Activated T-helper 2 cell treated with anti-CD3 and anti-CD28 coated beads, Interferon-gamma antibody, Interleukin-2, Interleukin-4, amounts not matched to agents 10 μg/mL and 5 μg/mL and 100 μg/mL, durations not matched to agents 14 hours and 24 hours and 36 hours (primary cell): ENCODE measurements at regions of chr5 and their contacts with region 1.

Region 1: DNA sequence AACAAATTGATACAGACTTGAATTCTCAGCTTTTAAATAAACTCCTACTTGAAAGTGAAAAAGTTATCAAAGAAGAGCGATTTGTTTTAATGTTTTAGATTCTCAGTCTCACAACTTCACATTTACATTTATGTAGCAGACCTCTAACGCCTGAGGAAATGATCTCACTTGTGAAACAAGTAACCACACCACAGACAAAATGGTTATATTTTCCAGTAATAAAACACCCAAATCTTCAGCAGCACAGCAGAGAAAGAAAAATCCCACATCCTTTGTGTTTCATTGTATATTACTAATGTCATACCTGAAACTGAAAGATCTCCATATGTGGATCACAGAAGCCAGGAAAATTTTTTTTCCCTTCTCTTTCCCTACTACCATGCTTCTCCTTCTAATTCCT is 29.8 kb upstream of the GZMA start:
- DNase-seq: no peak
- H3K4me3 Mint-ChIP-seq: peak overlapping the region; percentile 32
- H3K27ac Mint-ChIP-seq: peak overlapping the region; percentile 75
- H3K4me1 Mint-ChIP-seq: peaks cover 46% of the 10 kb centered on the region
- H3K27me3 Mint-ChIP-seq: no peaks in the 10 kb centered on the region

Region 2: DNA sequence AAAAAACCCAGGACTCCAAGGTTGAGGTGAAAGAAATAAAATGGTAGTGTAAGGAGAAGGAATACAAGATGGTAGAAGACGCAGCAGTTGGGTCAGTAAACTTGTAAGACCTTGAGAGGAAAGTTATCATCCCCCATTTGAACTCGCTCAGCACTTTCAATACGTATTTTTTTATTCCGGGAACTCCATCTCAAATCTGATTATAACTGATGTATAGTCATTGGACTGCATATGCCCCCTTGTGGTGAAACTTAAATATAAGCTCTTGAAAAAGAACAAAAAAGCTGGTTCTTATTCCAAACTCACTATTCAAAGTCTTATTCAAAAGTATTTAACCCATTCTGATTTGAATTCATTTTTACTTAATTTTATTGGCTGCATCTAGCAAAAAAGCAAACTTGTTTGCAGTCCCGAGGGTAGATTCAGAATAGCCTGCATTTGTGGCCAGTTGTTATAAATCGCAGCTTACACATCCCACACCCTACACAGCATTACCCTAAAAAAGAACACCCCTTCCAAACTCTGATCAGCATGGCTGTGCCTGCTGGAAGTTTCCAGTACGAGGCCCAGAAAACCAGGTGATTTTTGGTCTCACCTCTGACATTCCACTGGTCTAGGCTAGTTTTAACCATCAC is 205.2 kb before region 1 on chr5:
- intact Hi-C with region 1: loop called (anchors 2 kb)
- DNase-seq: no peak
- H3K4me3 Mint-ChIP-seq: no peak overlapping the region
- H3K27ac Mint-ChIP-seq: no peak overlapping the region
- H3K4me1 Mint-ChIP-seq: peaks cover 29% of the 10 kb centered on the region
- H3K27me3 Mint-ChIP-seq: peaks cover 64% of the 10 kb centered on the region

Region 3: DNA sequence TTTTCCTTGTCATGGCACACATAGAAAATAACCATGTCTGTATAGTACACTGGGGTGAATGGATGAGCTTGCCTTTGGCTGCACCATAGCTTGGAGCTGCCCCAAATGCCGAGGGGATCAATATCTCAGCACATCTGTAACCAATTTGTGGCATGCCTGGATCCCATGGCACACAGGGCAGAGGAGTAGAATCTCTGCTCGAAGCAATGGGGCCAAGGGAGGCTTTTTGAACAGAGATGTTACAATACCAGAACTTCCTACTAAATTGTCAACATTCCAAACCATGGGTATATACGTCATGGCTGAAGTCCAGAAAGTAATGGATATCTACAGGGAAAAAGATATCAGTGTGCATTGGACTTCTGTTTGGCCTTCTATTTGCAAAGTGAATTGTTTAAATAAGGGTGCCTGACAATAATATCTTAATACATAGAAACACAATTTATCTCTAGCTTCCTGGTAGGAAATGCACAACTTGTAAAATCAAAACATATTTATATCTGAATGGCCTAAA is 126.3 kb before region 1 on chr5:
- intact Hi-C with region 1: no loop called
- DNase-seq: no peak
- H3K4me3 Mint-ChIP-seq: no peak overlapping the region
- H3K27ac Mint-ChIP-seq: no peak overlapping the region
- H3K4me1 Mint-ChIP-seq: peaks cover 22% of the 10 kb centered on the region
- H3K27me3 Mint-ChIP-seq: no peaks in the 10 kb centered on the region

Region 4: GRCh38 chr5:55021410-55021809 is 51.3 kb before region 1 on chr5:
- intact Hi-C with region 1: loop called (anchors 2 kb)
- DNase-seq: no peak
- H3K4me3 Mint-ChIP-seq: no peak overlapping the region
- H3K27ac Mint-ChIP-seq: no peak overlapping the region
- H3K4me1 Mint-ChIP-seq: peaks cover 41% of the 10 kb centered on the region
- H3K27me3 Mint-ChIP-seq: no peaks in the 10 kb centered on the region

Region 5: GRCh38 chr5:55062039-55062779 is 10.5 kb before region 1 on chr5:
- intact Hi-C with region 1: loop called (anchors 1 kb)
- DNase-seq: peak; percentile 78
- H3K4me3 Mint-ChIP-seq: peak overlapping the region; percentile 64
- H3K27ac Mint-ChIP-seq: peak overlapping the region; percentile 94
- H3K4me1 Mint-ChIP-seq: peaks cover 70% of the 10 kb centered on the region
- H3K27me3 Mint-ChIP-seq: no peaks in the 10 kb centered on the region

Region 6: GRCh38 chr5:55146543-55147151 is 74.0 kb after region 1 on chr5:
- intact Hi-C with region 1: loop called (anchors 2 kb)
- DNase-seq: peak; percentile 80
- H3K4me3 Mint-ChIP-seq: peak overlapping the region; percentile 23
- H3K27ac Mint-ChIP-seq: no peak overlapping the region
- H3K4me1 Mint-ChIP-seq: peaks cover 46% of the 10 kb centered on the region
- H3K27me3 Mint-ChIP-seq: peaks cover 23% of the 10 kb centered on the region